Gastrocnemius medialis (tissue), 4 donors: ENCODE measurements at regions of chr12 and their contacts with region 1.

Region 1: DNA sequence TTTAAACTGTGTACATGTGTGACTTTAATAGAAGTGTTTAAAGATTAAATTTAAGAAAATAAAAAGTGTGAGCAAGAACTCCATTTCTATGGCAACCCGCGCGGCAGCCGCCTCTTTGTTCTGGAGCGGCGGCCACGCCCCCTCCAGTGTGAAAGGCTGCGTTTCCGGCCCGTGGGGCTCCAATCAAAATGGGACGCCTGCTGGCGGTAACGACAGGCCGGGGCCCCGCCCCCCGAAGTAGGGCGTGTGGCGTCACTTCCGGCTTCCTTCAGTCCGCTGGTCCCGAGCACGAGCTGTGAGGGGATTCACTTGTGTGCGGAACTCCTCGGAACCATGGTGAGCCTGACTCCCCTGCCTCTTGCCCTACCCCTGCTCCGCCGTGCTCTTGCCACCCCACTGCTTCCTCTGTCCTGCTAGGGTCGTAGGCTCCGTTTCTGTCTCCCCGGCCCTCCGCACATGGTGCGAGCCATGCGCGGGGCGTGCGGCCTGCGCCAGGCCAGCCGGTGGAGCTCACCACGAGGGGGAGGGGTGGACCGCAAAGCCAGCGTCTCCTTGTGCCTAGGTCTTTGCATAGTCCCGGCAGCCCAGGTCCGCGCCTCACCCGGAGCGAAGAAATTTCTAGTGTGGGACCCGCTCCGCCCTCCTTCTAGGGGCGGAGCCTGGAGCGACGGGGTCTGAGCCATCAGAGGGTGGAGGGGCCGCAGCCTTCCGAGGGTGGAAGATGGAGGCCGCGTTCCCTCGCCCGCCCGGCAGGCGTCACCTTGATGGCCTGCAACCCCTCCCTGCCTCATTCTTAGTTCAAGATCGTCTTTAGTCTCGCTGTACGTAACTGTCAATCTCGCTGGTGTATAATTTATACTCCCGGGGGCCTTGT is at the start of gene CCT2:
- DNase-seq: peak; percentile 94 to 95
- ATAC-seq: peak; percentile 98 to 99
- H3K4me3 ChIP-seq: peak within 1 kb of the TSS; percentile 92 to 98 (median 96)
- H3K27ac ChIP-seq: peak within 1 kb of the TSS; percentile 89 to 96 (median 94)
- H3K4me1 ChIP-seq: peaks cover 5 to 9% of the 10 kb centered on the region in 2 donors
- H3K27me3 ChIP-seq: no peaks in the 10 kb centered on the region
- CTCF ChIP-seq: peak in 4 of 5 experiments; percentile 18 to 32 (median 26)
- POLR2A ChIP-seq: peak; percentile 87 to 90
- total RNA-seq, gene CCT2: 124 to 153 (median 138) TPM

Region 2: GRCh38 chr12:68831272-68831671 is 754.2 kb before region 1 on chr12:
- in situ Hi-C with region 1: loop called in 1 of 4 experiments (anchors 25 kb)
- intact Hi-C with region 1: no loop called
- DNase-seq: no peak
- ATAC-seq: no peak
- H3K4me3 ChIP-seq: no peak overlapping the region
- H3K27ac ChIP-seq: no peak overlapping the region
- H3K4me1 ChIP-seq: no peaks in the 10 kb centered on the region
- H3K27me3 ChIP-seq: no peaks in the 10 kb centered on the region
- CTCF ChIP-seq: no peak
- POLR2A ChIP-seq: no peak

Region 3: GRCh38 chr12:69359531-69360347 is 225.7 kb before region 1 on chr12 and contains the start of gene YEATS4:
- in situ Hi-C with region 1: no loop called
- intact Hi-C with region 1: loop called (anchors 5 kb)
- DNase-seq: peak; percentile 51 to 76
- ATAC-seq: peak; percentile 90 to 92
- H3K4me3 ChIP-seq: peak within 1 kb of the TSS; percentile 84 to 89 (median 86)
- H3K27ac ChIP-seq: peak within 1 kb of the TSS; percentile 86 to 93 (median 91)
- H3K4me1 ChIP-seq: peaks cover 4 to 13% of the 10 kb centered on the region in 2 donors
- H3K27me3 ChIP-seq: no peaks in the 10 kb centered on the region
- CTCF ChIP-seq: no peak
- POLR2A ChIP-seq: peak; percentile 31 to 51
- total RNA-seq, gene YEATS4: 12.5 to 34.6 (median 25.8) TPM

Region 4: DNA sequence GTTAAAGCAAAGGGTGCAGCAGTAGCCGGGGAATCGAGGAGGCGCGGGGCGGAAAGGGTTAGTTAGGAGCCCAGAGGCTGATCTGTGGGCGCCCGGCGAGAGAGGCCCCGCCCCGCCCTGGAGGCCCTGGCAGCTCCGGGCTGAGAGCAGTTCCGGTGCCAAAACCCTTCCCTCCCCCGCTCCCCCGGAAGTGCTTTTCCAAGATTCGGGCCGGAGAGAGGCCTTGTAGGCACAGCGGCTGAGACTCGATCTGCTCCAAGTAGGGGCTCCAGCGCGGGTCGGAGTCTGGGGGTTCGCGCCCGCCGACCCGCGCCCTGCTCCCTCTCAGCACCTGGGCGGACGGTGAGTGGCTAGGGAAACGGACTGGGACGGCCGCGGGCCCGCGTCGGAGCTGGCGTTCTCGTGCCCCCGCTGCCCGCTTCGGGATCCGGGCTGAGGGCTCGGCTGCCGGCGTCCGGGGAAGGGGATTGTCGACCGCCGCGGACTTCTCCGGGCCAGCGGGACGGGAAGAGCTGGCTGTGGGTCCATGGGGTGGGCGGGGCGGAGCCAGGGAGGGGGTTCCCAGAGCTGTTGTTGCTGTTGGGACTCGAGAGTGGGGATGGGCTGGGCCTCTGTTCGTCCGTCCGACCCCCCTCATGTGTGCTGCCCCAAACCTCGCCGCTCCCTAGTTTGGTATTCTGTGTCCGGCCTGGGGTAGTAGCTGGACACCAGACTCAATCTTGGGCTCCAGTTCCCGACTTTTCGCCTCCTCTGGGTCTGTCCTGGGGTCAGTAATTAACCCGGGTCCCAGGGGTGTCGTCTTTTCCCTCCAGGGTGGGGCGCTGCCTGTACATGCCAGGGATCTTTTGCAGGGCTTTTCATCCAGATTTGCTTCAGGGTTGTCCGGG is 115.0 kb before region 1 on chr12 and contains the start of gene FRS2:
- in situ Hi-C with region 1: no loop called
- intact Hi-C with region 1: loop called (anchors 1 kb)
- DNase-seq: peak; percentile 80 to 88
- ATAC-seq: peak; percentile 99
- H3K4me3 ChIP-seq: peak within 1 kb of the TSS; percentile 92 to 96 (median 94)
- H3K27ac ChIP-seq: peak within 1 kb of the TSS; percentile 83 to 96 (median 92)
- H3K4me1 ChIP-seq: peaks cover 43 to 45% of the 10 kb centered on the region in 2 donors
- H3K27me3 ChIP-seq: no peaks in the 10 kb centered on the region
- CTCF ChIP-seq: peak in 3 of 5 experiments; percentile 21 to 45 (median 23)
- POLR2A ChIP-seq: peak; percentile 73 to 80
- total RNA-seq, gene FRS2: 21.0 to 32.1 (median 21.3) TPM

Region 5: DNA sequence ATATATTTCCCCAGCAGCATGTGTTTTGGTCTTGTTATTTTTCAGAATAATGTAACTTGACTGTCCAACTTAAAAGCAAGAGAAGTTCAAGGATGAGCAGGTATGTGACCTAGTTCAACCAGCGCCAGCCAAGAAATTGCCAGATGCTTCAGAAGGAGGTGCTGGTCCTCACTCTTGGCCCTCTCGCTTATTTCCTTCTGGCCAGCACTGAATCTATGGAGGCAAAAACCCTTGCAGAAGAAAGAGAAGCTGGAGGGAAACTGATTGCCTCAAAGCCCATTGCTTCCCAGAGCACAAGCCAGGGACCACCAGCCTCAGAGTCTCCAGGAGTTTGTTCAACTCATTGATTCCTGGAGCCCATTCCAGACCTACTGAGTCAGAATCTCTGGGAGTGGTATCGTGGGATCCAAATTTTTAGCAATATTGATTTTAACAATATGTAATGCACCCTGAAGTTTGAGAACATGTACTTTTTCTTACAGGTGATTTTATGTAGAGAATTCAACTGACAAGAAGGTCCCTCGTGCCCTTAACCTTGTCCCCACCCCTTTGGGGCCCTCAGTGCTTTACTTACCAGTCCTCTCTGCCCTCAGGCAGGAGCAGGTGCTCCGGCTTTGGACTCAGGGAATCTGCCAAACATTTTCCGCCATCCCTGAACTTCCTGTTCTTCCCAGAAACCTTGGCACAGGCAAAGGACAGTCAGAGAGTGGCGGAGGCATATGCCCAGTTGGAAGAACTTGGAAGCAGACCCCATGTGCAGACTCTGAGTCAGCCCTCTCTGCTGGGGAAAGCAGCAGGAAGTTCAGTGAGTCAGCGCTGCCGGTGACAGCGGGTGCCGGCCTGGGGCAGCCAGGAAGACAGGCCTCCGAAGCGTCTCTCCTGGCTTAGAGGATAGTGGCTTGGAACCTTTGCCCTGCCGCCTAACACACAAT is 103.3 kb after region 1 on chr12:
- in situ Hi-C with region 1: no loop called
- intact Hi-C with region 1: loop called (anchors 5 kb)
- DNase-seq: peak; percentile 94 to 98
- ATAC-seq: peak; percentile 80 to 82
- H3K4me3 ChIP-seq: peak overlapping the region in 1 of 4 donors; percentile 5
- H3K27ac ChIP-seq: peak overlapping the region; percentile 77 to 93 (median 90)
- H3K4me1 ChIP-seq: peaks cover 78 to 87% of the 10 kb centered on the region in 2 donors
- H3K27me3 ChIP-seq: no peaks in the 10 kb centered on the region
- CTCF ChIP-seq: no peak
- POLR2A ChIP-seq: peak; percentile 78 to 89

Region 6: GRCh38 chr12:69879041-69879960 is 293.9 kb after region 1 on chr12:
- in situ Hi-C with region 1: no loop called
- intact Hi-C with region 1: no loop called
- DNase-seq: peak; percentile 34 to 42
- ATAC-seq: peak; percentile 87 to 88
- H3K4me3 ChIP-seq: peak overlapping the region in 3 of 4 donors; percentile 24 to 48 (median 29)
- H3K27ac ChIP-seq: no peak overlapping the region
- H3K4me1 ChIP-seq: peaks cover 0 to 4% of the 10 kb centered on the region in 2 donors
- H3K27me3 ChIP-seq: no peaks in the 10 kb centered on the region
- CTCF ChIP-seq: peak; percentile 59 to 88 (median 80)
- POLR2A ChIP-seq: no peak